A549 (cell line): ENCODE measurements at regions of chr19 and their contacts with region 1.

Region 1: GRCh38 chr19:12965017-12965811 is 4.2 kb upstream of the DAND5 start:
- DNase-seq: peak; percentile 53 to 76
- ATAC-seq: peak; percentile 97 to 98
- H3K4me3 ChIP-seq: peak overlapping the region; percentile 53
- H3K27ac ChIP-seq: peak overlapping the region; percentile 91
- H3K4me1 ChIP-seq: peaks cover 11% of the 10 kb centered on the region; the same call in 1 of the 3 replicates
- CTCF ChIP-seq: peak; percentile 67
- EP300 ChIP-seq: no peak
- POLR2A ChIP-seq: no peak
- RAD21 ChIP-seq: peak; percentile 53 to 63

Region 2: DNA sequence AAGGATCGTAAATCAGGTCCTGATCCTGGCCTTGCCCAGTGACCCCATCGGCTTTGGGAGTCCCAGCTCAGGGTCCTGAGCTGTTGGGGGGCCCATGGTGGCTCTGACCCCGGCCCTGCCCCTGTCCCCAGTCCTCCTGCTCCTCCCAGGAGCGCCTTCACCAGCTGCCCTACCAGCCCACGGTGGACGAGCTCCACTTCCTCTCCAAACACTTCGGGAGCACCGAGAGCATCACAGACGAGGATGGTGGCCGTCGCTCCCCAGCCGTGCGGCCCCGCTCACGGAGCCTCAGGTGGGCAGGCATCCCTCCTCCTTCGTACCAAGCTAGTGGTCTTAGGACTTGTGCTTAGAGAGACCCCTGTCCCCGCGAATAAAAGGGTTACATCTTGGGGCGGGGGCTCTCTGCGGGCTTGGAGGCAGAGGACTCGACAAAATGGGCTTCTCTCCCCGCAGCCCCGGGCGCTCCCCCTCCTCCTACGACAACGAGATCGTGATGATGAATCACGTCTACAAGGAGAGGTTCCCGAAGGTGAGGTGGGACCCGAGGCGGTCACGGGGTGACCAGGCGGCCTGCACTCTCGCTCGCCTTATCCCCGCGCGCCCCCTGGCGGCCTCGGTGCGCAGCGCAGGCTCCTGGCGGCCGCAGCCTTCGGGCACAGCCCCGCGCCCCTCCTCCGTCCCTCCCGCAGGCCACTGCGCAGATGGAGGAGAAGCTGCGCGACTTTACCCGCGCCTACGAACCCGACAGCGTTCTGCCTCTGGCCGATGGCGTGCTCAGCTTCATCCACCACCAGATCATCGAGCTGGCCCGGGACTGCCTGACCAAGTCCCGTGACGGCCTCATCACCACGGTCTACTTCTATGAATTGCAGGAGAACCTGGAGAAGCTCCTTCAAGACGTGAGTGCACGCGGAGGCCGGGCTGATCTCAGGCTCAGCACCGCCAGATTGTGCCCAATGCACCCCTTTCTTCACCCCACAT is 117.8 kb before region 1 on chr19:
- CTCF ChIA-PET with region 1: no interaction called
- POLR2A ChIA-PET with region 1: no interaction called
- DNase-seq: peak; percentile 76
- ATAC-seq: peak; percentile 97 to 99
- H3K4me3 ChIP-seq: no peak overlapping the region
- H3K27ac ChIP-seq: peak overlapping the region; percentile 20 to 70; a peak in 2 of 6 replicates
- H3K4me1 ChIP-seq: 0 out of 3 replicates have a peak, but pooled peaks cover 3% of the 10 kb centered on the region
- CTCF ChIP-seq: peak; percentile 80
- EP300 ChIP-seq: no peak
- POLR2A ChIP-seq: no peak
- RAD21 ChIP-seq: peak; percentile 75 to 85

Region 3: DNA sequence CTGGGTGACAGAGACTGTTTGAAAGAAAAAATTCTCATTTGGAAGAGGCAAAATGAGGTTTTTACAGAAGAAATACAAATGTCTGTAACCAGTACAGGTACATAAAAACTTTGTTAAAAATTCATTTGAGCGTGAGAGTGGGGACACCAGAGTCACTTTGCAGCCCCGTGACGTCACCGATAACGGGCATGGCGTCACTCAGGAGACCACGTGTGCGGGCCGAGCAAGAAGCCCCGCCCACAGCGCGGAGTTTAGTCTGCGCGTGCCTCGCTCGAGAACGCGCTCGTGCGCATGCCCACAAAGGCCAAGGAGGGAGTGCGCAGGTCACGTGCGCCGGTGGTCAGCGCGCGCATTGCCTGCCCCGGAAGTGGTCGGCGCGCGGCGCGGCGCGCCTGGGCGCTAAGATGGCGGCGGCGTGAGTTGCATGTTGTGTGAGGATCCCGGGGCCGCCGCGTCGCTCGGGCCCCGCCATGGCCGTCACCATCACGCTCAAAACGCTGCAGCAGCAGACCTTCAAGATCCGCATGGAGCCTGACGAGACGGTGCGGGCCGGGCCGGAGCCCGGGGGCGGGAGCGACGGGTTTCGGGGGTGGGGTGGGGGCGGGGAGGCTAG is 19.6 kb before region 1 on chr19 and contains the start of gene RAD23A:
- CTCF ChIA-PET with region 1: interaction called, 13 read pairs
- POLR2A ChIA-PET with region 1: no interaction called
- DNase-seq: peak; percentile 68 to 98
- ATAC-seq: peak; percentile 84 to 89
- H3K4me3 ChIP-seq: peak within 1 kb of the TSS; percentile 95
- H3K27ac ChIP-seq: peak within 1 kb of the TSS; percentile 98 to 100
- H3K4me1 ChIP-seq: peaks cover 17% of the 10 kb centered on the region; the same call in 2 of the 3 replicates
- CTCF ChIP-seq: no peak
- EP300 ChIP-seq: no peak
- POLR2A ChIP-seq: peak; percentile 60
- RAD21 ChIP-seq: no peak
- polyA plus RNA-seq, gene RAD23A: 46.4 and 56.2 TPM in 2 replicates

Region 4: GRCh38 chr19:13051267-13052165 is 86.3 kb after region 1 on chr19:
- CTCF ChIA-PET with region 1: interaction called, 20 read pairs
- POLR2A ChIA-PET with region 1: no interaction called
- DNase-seq: peak in 1 of 2 experiments; percentile 14
- ATAC-seq: peak; percentile 49 to 68; a peak in 3 of 6 replicates
- H3K4me3 ChIP-seq: no peak overlapping the region
- H3K27ac ChIP-seq: peak overlapping the region in 1 of 2 experiments; percentile 48; a peak in 3 of 6 replicates
- H3K4me1 ChIP-seq: peaks cover 36% of the 10 kb centered on the region
- CTCF ChIP-seq: no peak
- EP300 ChIP-seq: no peak
- POLR2A ChIP-seq: no peak
- RAD21 ChIP-seq: no peak

Region 5: DNA sequence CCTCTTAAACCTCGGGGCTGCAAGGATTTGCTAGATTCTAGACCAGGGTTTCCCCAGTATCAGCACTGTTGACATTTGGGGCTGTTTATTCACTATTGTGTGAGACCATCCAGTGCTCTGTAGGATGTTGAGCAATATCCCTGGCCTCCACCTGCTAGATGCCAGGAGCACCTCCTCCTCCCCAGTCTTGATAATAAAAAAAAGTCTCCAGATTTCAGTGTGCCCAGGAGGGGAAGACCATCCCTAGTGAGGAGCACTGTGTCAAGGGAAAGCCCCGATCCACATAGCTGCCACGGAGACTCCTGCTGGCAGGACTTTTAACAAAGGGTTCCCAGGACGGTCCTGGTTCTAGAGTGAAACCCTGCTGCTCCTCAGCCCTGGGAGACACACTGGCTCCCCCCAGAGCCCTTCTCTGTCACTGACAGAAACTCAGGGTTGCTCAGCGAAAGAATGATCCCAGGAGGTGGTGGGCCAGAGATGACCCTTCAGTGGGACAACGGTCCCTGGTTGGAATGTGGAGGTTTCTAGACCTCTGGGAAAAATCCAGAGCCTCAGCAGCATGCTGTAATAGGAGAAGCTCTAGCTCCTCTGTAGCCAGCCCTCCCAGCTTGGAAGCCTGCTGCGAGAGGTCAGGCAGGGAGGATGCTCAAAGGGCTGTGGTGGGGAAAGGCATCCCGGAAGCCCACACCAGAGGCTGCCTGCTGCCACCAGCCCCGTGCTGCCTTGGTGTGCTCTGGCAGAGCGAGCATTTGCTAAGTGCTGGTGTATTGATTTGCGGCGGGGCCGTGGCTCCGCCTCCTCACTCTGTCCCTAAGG is 117.2 kb after region 1 on chr19:
- CTCF ChIA-PET with region 1: interaction called, 20 read pairs
- POLR2A ChIA-PET with region 1: no interaction called
- DNase-seq: peak; percentile 58 to 61
- ATAC-seq: peak; percentile 79 to 91
- H3K4me3 ChIP-seq: no peak overlapping the region
- H3K27ac ChIP-seq: no peak overlapping the region
- H3K4me1 ChIP-seq: peaks cover 17% of the 10 kb centered on the region
- CTCF ChIP-seq: peak; percentile 22; the same call in 1 of the 3 replicates
- EP300 ChIP-seq: no peak
- POLR2A ChIP-seq: no peak
- RAD21 ChIP-seq: peak; percentile 32 to 51; a peak in 3 of 5 replicates